ENCODE measurements at regions of chr14 and their contacts with region 1.

Region 1: GRCh38 chr14:68248481-68249255 is 429.1 kb downstream of the RAD51B start:
- DNase-seq: peak; percentile 85
- H3K4me3 ChIP-seq: peak overlapping the region; percentile 2
- H3K27ac ChIP-seq: peak overlapping the region; percentile 66
- H3K4me1 ChIP-seq: peaks cover 60% of the 10 kb centered on the region
- CTCF ChIP-seq: peak; percentile 92

Region 2: GRCh38 chr14:67943947-67944346 is 304.7 kb before region 1 on chr14:
- CTCF ChIA-PET with region 1: no interaction called
- POLR2A ChIA-PET with region 1: interaction called, 3 read pairs
- intact Hi-C with region 1: loop called (anchors 2 kb)
- DNase-seq: peak; percentile 80
- H3K4me3 ChIP-seq: no peak overlapping the region
- H3K27ac ChIP-seq: no peak overlapping the region
- H3K4me1 ChIP-seq: no peaks in the 10 kb centered on the region
- CTCF ChIP-seq: peak; percentile 98

Region 3: DNA sequence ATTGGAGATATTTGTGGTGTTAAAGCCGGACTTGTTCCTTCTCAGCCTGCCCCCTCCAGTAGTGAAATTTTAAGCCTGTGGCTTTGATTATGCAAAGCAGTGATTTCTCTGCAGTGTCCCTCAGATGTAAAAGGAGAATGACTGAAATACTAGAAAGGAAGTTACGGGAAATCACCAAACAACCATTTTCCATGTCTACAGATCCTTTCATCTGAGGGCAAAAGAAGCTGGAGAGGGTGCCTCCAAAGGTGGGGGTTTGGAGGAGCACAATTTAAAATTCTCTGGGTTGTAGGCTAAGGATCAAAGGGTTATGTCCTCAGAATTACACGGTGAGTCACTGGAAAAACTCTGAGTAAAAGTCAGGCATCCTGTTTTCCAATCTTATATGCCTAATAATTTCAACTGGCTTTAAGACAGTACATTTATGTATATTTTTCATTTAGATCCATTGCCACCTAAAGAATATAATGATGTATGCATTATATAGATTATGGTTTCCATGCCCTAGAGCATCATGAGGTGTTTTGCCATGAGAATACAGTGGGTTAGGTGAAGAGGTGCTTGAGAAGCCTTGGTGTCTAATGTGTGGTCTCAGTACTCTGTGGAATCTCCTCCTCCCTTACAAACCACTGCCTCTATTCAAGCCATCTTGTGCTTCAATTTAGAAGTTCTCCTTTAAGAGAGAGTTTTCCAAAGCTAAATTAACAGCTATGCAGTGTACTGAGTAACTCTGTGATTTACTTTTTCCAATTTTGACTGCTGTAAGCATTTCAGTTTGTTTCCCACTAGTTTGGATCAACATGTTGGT is 66.9 kb before region 1 on chr14:
- CTCF ChIA-PET with region 1: no interaction called
- POLR2A ChIA-PET with region 1: no interaction called
- intact Hi-C with region 1: no loop called
- DNase-seq: no peak
- H3K4me3 ChIP-seq: no peak overlapping the region
- H3K27ac ChIP-seq: no peak overlapping the region
- H3K4me1 ChIP-seq: no peaks in the 10 kb centered on the region
- CTCF ChIP-seq: no peak

Region 4: DNA sequence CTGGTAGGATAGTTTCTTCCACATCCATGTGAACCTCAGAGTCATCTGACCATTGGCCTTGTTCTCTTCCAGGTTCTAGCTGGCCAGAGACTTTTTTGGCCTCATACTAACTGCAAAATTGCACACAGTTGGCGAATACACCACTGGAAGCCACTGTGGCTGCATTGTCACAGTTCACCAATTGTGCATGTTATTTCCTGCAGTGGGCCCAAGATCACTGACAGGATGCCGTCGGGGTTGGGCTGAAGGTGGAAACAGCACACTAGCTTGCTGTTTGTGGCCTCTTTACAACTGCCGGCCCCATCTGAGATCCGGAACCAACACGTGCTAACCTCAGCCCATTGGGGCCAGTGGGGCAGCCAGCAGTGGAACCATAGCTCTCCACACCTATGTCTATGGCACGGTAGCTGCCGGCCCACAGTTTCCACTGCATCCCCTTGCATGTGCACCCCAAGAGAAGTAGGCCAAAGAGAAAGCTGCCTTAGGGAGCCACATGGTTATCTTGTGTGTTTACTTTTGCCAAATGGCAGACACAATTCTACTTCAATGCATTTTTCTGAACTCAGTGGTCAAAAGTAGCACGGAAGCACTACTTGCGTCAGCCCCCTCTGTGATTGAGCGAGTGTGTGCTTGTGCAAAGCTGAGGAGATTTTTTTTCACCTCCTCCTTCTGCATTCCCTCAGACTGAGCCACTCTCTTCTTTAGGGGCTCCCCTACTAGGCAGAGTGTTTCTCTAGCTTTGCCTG is 34.9 kb after region 1 on chr14:
- CTCF ChIA-PET with region 1: no interaction called
- POLR2A ChIA-PET with region 1: interaction called, 13 read pairs
- intact Hi-C with region 1: loop called (anchors 2 kb)
- DNase-seq: peak; percentile 96
- H3K4me3 ChIP-seq: peak overlapping the region; percentile 54
- H3K27ac ChIP-seq: peak overlapping the region; percentile 92
- H3K4me1 ChIP-seq: peaks cover 98% of the 10 kb centered on the region
- CTCF ChIP-seq: 0 out of 2 replicates have a peak, but pooled peaks have one; percentile 29

Region 5: DNA sequence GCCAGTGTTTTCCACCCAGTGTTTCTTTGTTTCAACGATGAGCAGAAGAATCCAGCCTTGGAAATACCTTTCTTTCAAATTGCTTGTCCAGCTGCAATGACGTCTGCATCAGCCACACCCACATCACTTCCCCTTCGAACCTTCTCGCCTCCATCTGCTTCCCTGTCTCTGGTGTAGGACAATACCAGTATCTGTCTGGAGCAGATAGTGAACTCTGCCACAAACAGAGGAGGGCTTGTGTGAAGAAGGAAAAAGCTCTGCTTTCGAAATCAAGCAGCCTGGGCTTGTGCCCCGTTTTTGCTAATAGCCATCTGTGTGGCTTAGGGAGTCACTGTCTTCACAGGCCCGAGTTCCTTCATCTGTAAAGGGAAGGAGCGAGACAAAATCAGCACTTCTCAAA is 128.8 kb after region 1 on chr14:
- CTCF ChIA-PET with region 1: no interaction called
- POLR2A ChIA-PET with region 1: interaction called, 5 read pairs
- intact Hi-C with region 1: loop called (anchors 2 kb)
- DNase-seq: peak; percentile 56
- H3K4me3 ChIP-seq: peak overlapping the region; percentile 1
- H3K27ac ChIP-seq: peak overlapping the region; percentile 4
- H3K4me1 ChIP-seq: peaks cover 69% of the 10 kb centered on the region
- CTCF ChIP-seq: no peak

Region 6: DNA sequence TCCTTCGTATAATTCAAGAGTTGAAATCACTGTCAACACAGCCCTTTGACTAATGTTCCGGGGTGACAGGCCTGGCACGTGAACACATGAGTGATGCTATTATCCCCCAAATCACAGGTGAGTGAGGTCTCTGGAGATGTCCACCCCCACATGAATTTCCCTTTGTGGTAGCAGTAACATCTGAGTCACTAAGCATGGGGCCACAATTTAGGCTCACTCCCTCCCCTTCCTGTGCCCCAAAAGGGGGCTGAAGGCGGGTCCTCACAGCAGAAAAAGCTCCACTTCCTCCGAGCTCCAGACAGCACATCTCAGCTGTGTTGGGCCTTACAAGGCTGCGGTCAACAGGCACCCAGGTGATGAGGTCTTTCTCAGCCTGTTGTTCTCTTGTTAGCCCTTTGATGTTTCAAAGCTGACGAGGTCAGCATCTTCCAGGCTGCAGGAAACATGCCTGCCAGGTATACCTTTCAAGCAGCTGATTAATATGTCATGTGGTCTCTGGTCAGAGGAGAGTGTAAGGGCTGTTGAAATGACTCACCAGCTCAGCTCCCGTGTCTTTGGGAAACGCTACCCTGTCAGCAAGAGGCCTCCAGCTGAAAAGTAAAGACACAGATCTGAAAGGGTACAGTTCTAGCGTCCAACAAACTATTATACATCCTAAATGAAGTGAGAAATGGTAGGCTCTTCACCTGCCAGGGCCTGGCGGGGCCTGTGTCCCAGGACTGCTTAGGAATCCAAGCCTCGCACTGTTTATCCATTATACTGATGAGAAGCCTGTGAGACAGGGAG is 436.9 kb after region 1 on chr14:
- CTCF ChIA-PET with region 1: no interaction called
- POLR2A ChIA-PET with region 1: no interaction called
- intact Hi-C with region 1: loop called (anchors 1 kb)
- DNase-seq: peak; percentile 98
- H3K4me3 ChIP-seq: peak overlapping the region; percentile 57
- H3K27ac ChIP-seq: peak overlapping the region; percentile 97
- H3K4me1 ChIP-seq: peaks cover 98% of the 10 kb centered on the region
- CTCF ChIP-seq: no peak

Region 7: DNA sequence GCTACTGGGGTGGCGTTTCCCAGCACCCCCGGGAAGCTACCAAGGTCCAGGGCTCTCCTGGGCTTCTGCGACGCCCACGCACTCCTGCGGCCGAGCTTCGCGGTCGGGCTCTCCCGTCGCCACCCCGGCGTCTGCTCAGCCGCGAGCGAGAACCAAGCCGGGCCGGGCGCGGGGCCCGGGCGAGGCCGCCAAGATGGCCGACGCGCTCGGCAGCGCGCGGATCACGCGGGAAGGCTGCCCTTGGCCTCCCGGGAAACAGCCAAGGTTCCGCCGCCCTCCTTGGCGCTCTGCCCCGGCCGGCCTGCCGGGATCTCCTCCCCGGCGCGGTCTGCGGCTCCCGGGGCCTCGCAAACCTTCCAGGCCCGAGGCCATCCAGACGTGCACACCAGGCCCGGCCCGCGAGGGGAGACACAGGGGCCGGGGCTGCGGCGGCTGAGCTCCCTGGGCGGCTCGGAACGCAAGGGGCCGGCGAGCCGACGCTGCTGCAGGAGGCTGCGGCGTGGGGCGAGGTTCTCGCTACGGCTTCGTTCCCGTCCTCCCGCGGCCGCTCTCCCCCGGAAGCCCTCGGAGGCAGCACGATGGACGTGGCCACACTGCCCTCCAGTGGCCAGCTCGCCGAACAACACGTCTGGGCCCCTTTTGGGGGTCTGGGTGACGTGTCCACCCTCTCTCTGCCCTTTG is 567.7 kb after region 1 on chr14:
- CTCF ChIA-PET with region 1: interaction called, 8 read pairs
- POLR2A ChIA-PET with region 1: interaction called, 44 read pairs
- intact Hi-C with region 1: loop called (anchors 1 kb)
- DNase-seq: peak; percentile 95
- H3K4me3 ChIP-seq: peak overlapping the region; percentile 61
- H3K27ac ChIP-seq: peak overlapping the region; percentile 92
- H3K4me1 ChIP-seq: peaks cover 82% of the 10 kb centered on the region
- CTCF ChIP-seq: peak; percentile 90